AG04449 (cell line): ENCODE measurements at regions of chr3 and their contacts with region 1.

Region 1: GRCh38 chr3:49411968-49412631 is at the starts of genes RHOA and TCTA:
- DNase-seq: peak; percentile 99
- H3K4me3 ChIP-seq: peak within 1 kb of the TSS; percentile 96
- CTCF ChIP-seq: no peak

Region 2: GRCh38 chr3:49358217-49358883 is 53.8 kb before region 1 on chr3 and contains the start of gene GPX1:
- CTCF ChIA-PET with region 1: interaction called, 3 read pairs
- POLR2A ChIA-PET with region 1: interaction called, 10 read pairs
- DNase-seq: peak; percentile 64
- H3K4me3 ChIP-seq: peak within 1 kb of the TSS; percentile 71
- CTCF ChIP-seq: no peak

Region 3: GRCh38 chr3:49602877-49603411 is 190.8 kb after region 1 on chr3:
- CTCF ChIA-PET with region 1: no interaction called
- POLR2A ChIA-PET with region 1: no interaction called
- DNase-seq: no peak
- H3K4me3 ChIP-seq: no peak overlapping the region
- CTCF ChIP-seq: no peak